ENCODE measurements at regions of chr2 and their contacts with region 1.

Region 1: GRCh38 chr2:242031481-242032019 is 162.0 kb downstream of the RTP5 start:
- DNase-seq: peak; percentile 75 to 82 (median 79)
- H3K4me3 ChIP-seq: peak overlapping the region in 1 of 2 donors; percentile 47
- H3K4me3 Mint-ChIP-seq: peak overlapping the region; percentile 85 to 98 (median 94)
- H3K27ac ChIP-seq: peak overlapping the region; percentile 30
- H3K27ac Mint-ChIP-seq: peak overlapping the region; percentile 81 to 98 (median 95)
- H3K4me1 ChIP-seq: peaks cover 41% of the 10 kb centered on the region
- H3K4me1 Mint-ChIP-seq: peaks cover 41 to 66% (median 54%) of the 10 kb centered on the region in 4 donors
- H3K27me3 ChIP-seq: no peaks in the 10 kb centered on the region
- H3K27me3 Mint-ChIP-seq: peaks cover under 1 to 2% of the 10 kb centered on the region in 2 donors

Region 2: GRCh38 chr2:241965931-241966412 is 65.6 kb before region 1 on chr2:
- CTCF ChIA-PET with region 1: no interaction called
- POLR2A ChIA-PET with region 1: no interaction called
- intact Hi-C with region 1: loop called (anchors 5 kb)
- DNase-seq: peak; percentile 15 to 79 (median 37)
- H3K4me3 ChIP-seq: peak overlapping the region in 1 of 2 donors; percentile 24
- H3K4me3 Mint-ChIP-seq: peak overlapping the region; percentile 63 to 82 (median 77)
- H3K27ac ChIP-seq: no peak overlapping the region
- H3K27ac Mint-ChIP-seq: peak overlapping the region; percentile 68 to 92 (median 87)
- H3K4me1 ChIP-seq: peaks cover 18% of the 10 kb centered on the region
- H3K4me1 Mint-ChIP-seq: peaks cover 13 to 27% (median 21%) of the 10 kb centered on the region in 4 donors
- H3K27me3 ChIP-seq: no peaks in the 10 kb centered on the region
- H3K27me3 Mint-ChIP-seq: no peaks in the 10 kb centered on the region

Region 3: DNA sequence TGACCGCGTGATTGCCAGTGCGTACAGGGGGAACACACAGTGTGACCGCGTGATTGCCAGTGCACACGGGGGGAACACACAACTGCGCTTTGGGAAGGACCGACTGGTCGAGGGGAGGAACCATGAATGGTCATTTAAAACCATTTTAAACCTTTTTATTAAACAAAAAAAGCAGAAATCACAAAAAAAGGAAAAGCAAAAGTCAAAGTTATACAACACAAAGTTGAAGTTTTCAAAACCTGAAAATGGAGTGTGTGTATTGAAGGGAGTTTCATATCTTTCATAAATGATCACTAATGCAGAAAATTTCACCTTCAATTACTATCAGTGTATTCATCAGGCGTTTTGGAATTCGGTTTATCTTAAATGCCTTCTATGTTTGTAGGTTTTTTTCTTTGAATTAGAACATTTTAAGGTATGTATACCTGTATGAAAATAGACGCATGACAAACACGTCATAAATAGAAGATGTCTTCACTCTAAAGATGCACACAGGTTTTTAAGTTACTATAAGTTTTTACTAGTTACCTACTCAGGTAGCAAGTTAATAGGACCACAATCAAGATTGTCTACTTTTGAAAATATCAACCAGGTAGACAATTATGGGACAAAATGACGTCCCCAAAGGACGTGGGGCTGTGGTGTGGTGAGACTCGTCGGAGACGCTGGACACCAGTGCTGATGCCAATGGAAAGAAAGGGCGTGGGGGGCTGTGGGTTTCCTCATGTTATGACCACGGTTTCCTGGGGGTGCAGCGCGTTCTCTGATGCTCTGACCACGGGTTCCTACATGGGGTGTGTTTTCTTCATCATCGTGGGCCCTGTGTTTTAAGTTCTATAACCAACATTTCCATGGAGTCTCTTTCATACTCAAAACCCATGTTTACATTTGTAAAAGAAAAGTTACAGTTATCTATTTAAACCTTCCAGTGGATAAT is 20.7 kb before region 1 on chr2:
- CTCF ChIA-PET with region 1: no interaction called
- POLR2A ChIA-PET with region 1: no interaction called
- intact Hi-C with region 1: loop called (anchors 2 kb)
- DNase-seq: peak in 2 of 5 donors; percentile 11 to 28
- H3K4me3 ChIP-seq: no peak overlapping the region
- H3K4me3 Mint-ChIP-seq: peak overlapping the region in 1 of 8 donors; percentile 11
- H3K27ac ChIP-seq: no peak overlapping the region
- H3K27ac Mint-ChIP-seq: peak overlapping the region; percentile 7 to 77 (median 59)
- H3K4me1 ChIP-seq: no peaks in the 10 kb centered on the region
- H3K4me1 Mint-ChIP-seq: peaks cover 5 to 14% (median 7%) of the 10 kb centered on the region in 4 donors
- H3K27me3 ChIP-seq: no peaks in the 10 kb centered on the region
- H3K27me3 Mint-ChIP-seq: no peaks in the 10 kb centered on the region

Region 4: GRCh38 chr2:242020196-242021004 is 11.2 kb before region 1 on chr2:
- CTCF ChIA-PET with region 1: interaction called, 27 read pairs
- POLR2A ChIA-PET with region 1: interaction called, 17 read pairs
- intact Hi-C with region 1: no loop called
- DNase-seq: no peak
- H3K4me3 ChIP-seq: no peak overlapping the region
- H3K4me3 Mint-ChIP-seq: no peak overlapping the region
- H3K27ac ChIP-seq: no peak overlapping the region
- H3K27ac Mint-ChIP-seq: peak overlapping the region in 4 of 7 donors; percentile 11 to 51 (median 27)
- H3K4me1 ChIP-seq: no peaks in the 10 kb centered on the region
- H3K4me1 Mint-ChIP-seq: peaks cover 0 to 9% (median under 1%) of the 10 kb centered on the region in 4 donors
- H3K27me3 ChIP-seq: no peaks in the 10 kb centered on the region
- H3K27me3 Mint-ChIP-seq: peaks cover 0 to 4% of the 10 kb centered on the region in 2 donors

Region 5: DNA sequence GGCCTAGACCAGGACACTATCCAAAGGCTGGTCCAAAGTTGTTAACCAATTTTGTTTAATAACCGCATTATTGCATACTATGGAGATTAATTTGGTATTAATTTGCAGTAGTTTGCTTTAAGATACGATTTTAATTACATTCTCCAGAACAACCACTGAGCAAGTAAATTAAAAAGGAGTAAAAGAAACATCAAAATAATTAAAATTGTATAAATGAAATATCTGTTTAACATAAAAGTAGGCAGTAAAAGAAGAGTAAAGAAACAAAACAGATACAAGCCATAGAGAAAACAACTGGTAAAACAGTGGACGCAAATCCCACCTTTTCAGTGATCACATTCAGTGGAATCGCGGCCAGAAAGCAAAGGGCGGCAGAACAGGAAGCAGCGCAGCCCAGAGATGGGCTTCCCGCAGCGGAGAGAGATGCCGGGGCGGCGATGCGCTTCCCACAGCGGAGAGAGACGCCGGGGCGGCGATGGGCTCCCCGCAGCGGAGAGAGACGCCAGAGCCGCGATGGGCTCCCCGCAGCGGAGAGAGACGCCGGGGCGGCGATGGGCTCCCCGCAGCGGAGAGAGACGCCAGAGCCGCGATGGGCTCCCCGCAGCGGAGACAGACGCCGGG is 14.8 kb after region 1 on chr2:
- CTCF ChIA-PET with region 1: no interaction called
- POLR2A ChIA-PET with region 1: no interaction called
- intact Hi-C with region 1: no loop called
- DNase-seq: no peak
- H3K4me3 ChIP-seq: no peak overlapping the region
- H3K4me3 Mint-ChIP-seq: peak overlapping the region in 4 of 8 donors; percentile 66 to 78 (median 76)
- H3K27ac ChIP-seq: no peak overlapping the region
- H3K27ac Mint-ChIP-seq: peak overlapping the region in 1 of 7 donors; percentile 57
- H3K4me1 ChIP-seq: no peaks in the 10 kb centered on the region
- H3K4me1 Mint-ChIP-seq: peaks cover 0 to 10% (median 1%) of the 10 kb centered on the region in 4 donors
- H3K27me3 ChIP-seq: no peaks in the 10 kb centered on the region
- H3K27me3 Mint-ChIP-seq: peaks cover 15 to 28% of the 10 kb centered on the region in 2 donors

Region 6: DNA sequence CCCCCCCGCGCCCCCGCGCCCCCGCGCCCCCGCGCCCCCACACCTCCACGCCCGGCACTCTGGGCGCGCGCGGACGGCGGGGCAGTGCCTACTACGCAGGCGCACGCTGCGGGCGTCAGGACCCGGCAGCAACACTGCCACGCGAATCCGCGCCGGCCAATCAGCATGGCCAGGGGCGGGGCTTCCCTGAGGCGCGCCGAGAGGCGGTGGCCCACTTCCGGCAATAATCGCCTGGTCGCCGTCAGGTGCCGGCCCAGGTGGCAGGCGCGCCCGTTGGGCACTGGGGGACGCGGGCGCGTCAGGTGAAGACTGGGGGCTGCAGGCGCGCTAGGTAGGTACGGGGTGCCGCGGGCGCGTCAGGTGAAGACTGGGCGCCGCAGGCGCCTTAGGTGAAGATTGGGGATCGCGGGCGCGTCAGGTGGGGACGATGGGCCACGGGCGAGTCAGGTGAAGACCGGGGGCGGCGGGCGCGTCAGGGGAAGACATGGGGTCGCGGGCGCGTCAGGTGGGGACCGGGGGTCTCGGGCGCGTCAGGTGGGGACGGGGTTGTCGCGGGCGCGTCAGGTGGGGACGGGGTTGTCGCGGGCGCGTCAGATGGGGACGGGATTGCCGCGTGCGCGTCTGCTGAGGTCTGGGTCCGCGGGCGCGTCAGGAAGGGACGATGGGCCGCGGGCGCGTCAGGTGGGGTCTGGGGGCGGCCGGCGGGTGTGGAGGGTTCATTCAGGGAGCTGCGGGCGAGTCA is 57.1 kb after region 1 on chr2:
- CTCF ChIA-PET with region 1: no interaction called
- POLR2A ChIA-PET with region 1: no interaction called
- intact Hi-C with region 1: loop called (anchors 2 kb)
- DNase-seq: peak; percentile 92 to 94 (median 92)
- H3K4me3 ChIP-seq: peak overlapping the region in 1 of 2 donors; percentile 45
- H3K4me3 Mint-ChIP-seq: peak overlapping the region; percentile 82 to 96 (median 90)
- H3K27ac ChIP-seq: peak overlapping the region; percentile 69
- H3K27ac Mint-ChIP-seq: peak overlapping the region; percentile 79 to 97 (median 91)
- H3K4me1 ChIP-seq: peaks cover 18% of the 10 kb centered on the region
- H3K4me1 Mint-ChIP-seq: peaks cover 25 to 46% (median 31%) of the 10 kb centered on the region in 4 donors
- H3K27me3 ChIP-seq: no peaks in the 10 kb centered on the region
- H3K27me3 Mint-ChIP-seq: peaks cover 0 to 4% of the 10 kb centered on the region in 2 donors

Measured in CD4-positive, alpha-beta memory T cell (primary cell).